Naive thymus-derived CD8-positive, alpha-beta T cell (primary cell): ENCODE measurements at regions of chr16 and their contacts with region 1.

Region 1: DNA sequence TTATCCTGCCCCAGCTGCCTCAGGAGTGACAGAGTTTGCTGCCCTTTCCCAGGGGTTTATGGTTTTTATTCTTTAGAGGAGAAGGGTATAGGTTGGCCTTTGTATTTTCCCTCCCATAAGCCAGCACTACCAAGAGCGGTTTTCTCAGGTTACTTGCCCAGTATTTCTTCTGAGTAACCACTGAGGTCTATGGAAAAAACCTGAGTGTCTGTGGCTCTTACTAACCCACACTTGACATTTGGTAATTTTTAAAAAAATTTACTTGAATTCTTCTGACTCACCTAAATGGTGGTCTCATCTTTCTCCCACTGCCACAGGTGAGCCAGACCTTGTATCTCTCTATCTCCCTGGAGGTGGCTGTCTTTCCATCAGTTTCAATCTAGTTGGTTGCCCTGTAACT is 6.0 kb downstream of the SLC7A6 start:
- DNase-seq: no peak
- ATAC-seq: peak in 1 of 2 donors; percentile 47
- H3K4me3 Mint-ChIP-seq: peak overlapping the region in 9 of 10 donors; percentile 15 to 79 (median 52)
- H3K27ac Mint-ChIP-seq: peak overlapping the region; percentile 89 to 100 (median 99)
- H3K4me1 Mint-ChIP-seq: peaks cover 38 to 92% (median 91%) of the 10 kb centered on the region in 4 donors
- H3K27me3 Mint-ChIP-seq: peaks cover 0 to 1% (median 0%) of the 10 kb centered on the region in 5 donors

Region 2: GRCh38 chr16:68166264-68166663 is 104.1 kb before region 1 on chr16:
- POLR2A ChIA-PET with region 1: no interaction called
- DNase-seq: no peak
- ATAC-seq: no peak
- H3K4me3 Mint-ChIP-seq: no peak overlapping the region
- H3K27ac Mint-ChIP-seq: peak overlapping the region in 7 of 10 donors; percentile 6 to 75 (median 35)
- H3K4me1 Mint-ChIP-seq: peaks cover 0 to 4% (median 3%) of the 10 kb centered on the region in 4 donors
- H3K27me3 Mint-ChIP-seq: no peaks in the 10 kb centered on the region

Region 3: DNA sequence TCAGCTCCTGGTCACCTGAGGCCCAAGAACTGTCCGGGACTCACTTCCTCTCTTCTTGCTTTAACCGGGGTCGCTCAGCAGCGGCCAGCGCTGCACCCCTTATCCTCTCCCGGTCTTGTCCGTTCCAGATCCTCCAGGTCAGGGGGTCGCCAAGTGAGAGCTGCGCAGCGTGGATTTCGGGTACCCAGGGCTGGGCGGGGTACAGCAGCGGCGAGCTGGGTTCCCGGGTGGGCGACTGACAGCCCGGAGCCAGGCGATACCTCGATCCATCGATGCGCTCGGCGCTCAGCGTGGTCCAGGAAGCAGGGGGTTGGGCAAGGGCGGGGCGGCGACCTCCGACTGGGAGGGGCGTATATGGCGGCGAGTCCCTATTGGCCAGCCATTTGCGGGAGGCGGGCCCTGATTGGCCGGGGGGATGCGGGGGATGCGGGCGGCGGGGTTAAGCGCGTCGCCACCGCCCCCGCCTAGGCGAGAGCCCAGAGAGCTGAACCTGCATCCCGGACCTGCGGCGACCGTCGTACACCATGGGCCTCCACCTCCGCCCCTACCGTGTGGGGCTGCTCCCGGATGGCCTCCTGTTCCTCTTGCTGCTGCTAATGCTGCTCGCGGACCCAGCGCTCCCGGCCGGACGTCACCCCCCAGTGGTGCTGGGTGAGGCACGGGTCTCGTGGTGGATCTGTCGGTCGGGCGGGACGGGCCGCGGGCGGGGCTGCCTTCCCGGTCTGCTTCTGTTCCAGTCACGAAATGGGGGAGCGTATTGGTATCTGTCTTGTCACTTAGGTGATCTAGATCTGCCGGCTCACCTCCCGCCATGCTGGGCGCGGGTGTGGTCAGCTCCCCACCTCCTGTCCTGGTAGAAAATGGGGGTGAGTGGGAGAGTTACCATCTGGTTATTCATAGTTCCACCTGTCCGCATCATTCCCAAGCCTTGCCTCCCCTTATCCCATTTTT is 25.2 kb before region 1 on chr16 and contains the start of gene PLA2G15:
- POLR2A ChIA-PET with region 1: interaction called, 10 read pairs
- DNase-seq: peak; percentile 93 to 98 (median 96)
- ATAC-seq: peak; percentile 97
- H3K4me3 Mint-ChIP-seq: peak within 1 kb of the TSS; percentile 95 to 99 (median 98)
- H3K27ac Mint-ChIP-seq: peak within 1 kb of the TSS; percentile 77 to 96 (median 92)
- H3K4me1 Mint-ChIP-seq: peaks cover 14 to 39% (median 30%) of the 10 kb centered on the region in 4 donors
- H3K27me3 Mint-ChIP-seq: no peaks in the 10 kb centered on the region
- polyA plus RNA-seq, gene PLA2G15: 2.4 to 9.6 (median 4.6) TPM